KBM-7 (cell line): ENCODE measurements at regions of chr10 and their contacts with region 1.

Region 1: DNA sequence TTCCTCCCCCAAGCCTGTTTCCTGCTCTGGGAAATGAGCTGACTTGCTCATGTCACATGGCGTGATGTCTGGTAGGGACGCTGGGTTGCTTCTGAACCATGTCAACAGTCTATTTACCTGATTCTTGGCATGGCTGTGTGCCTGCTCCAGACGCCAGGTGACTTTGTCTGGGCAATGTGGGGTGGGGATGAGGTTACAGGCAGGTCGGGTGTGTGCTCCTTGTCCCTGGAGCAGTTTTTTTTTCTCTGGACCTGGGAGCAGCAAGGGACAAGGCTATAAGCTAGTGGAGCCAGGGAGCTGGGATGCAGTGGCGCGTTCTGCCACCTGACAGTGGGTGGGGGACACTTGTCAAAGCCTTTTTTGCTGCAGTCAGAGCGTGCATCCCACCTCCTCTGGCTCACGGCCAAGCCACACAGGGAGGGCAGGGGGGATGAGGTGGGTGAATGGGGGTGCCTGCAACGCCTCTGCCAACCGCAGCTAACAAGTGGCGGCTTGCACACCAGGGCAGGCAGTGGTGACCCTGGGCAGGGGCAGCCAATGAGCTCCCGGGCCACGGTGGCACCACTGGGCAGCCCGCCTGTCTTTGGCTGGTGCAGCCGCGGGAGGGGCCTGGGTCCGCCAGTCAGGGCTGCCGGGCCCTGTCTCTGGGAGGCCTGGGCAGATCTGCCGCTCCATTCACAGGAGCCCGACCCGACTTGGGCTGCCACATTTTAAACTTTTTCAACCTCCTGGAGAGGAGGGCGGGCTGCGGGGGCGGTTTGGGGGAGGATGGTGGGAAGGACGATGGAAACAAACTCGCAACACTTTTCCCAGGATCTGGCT is 22.9 kb downstream of the DNAJB12 start:
- DNase-seq: peak; percentile 95

Region 2: DNA sequence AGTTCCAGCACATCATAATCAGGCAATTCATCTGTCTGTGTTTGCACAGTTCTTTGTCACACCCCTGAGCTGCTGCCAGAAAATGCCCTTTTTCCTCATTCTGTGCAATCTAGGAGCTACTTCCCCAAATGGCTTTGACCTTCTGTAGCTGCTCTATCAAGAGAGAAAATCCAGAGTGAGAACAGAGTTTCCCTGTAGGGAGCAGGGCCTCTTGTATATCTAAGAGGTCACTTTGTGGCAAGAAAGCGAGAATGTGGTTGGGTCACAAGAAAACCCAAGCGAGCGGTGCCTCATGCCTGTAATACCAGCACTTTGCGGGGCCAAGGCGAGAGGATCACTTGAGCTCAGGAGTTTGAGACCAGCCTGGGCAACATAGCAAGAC is 988.4 kb before region 1 on chr10:
- in situ Hi-C with region 1: loop called (anchors 25 kb)
- DNase-seq: peak; percentile 52

Region 3: GRCh38 chr10:71927776-71928592 is 403.8 kb before region 1 on chr10:
- in situ Hi-C with region 1: loop called (anchors 25 kb)
- DNase-seq: no peak

Region 4: DNA sequence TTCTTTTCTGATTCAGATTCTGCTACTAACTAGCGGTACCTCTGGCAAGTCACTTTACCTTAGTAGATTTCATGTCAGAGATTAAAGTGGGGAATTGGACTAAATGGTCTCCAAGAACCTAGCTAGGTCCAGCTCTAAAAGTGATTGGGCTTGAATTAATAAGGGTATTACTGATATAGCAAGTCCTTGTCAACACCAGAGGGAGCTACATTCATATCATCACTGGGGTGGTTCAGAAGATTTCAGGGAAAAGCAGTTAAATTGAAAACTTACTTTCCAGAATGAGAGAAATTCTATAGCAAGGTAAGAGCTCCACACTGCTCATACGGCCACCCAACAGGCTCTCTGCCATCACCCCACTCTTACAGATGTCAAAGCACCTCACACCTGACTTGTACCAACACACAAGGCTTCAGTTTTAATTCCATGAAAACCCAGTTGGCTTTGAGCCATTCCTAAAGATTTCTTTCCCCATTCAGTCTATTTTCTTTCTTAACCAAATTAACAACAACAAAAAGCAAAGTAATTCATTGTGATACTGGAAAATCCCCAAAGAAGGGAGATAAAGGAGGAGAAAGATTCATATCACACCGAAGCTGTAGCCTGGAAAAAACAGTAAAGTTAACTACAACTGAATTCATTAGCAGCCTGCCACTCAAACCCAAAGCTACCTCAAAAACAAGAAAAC is 205.5 kb before region 1 on chr10:
- in situ Hi-C with region 1: loop called (anchors 25 kb)
- DNase-seq: peak; percentile 40